K562 (cell line): ENCODE measurements at regions of chr14 and their contacts with region 1.

Region 1: GRCh38 chr14:19878029-19878642 is 3.2 kb downstream of the OR4K2 start:
- DNase-seq: peak; percentile 15 to 43 (median 17)
- ATAC-seq: no peak
- H3K4me3 ChIP-seq: no peak overlapping the region
- H3K27ac ChIP-seq: no peak overlapping the region
- H3K4me1 ChIP-seq: no peaks in the 10 kb centered on the region
- H3K27me3 ChIP-seq: no peaks in the 10 kb centered on the region
- CTCF ChIP-seq: peak in 2 of 3 experiments; percentile 45 to 61; a peak in 3 of 6 replicates
- EP300 ChIP-seq: no peak
- POLR2A ChIP-seq: no peak
- RAD21 ChIP-seq: peak; percentile 30 to 59

Region 2: DNA sequence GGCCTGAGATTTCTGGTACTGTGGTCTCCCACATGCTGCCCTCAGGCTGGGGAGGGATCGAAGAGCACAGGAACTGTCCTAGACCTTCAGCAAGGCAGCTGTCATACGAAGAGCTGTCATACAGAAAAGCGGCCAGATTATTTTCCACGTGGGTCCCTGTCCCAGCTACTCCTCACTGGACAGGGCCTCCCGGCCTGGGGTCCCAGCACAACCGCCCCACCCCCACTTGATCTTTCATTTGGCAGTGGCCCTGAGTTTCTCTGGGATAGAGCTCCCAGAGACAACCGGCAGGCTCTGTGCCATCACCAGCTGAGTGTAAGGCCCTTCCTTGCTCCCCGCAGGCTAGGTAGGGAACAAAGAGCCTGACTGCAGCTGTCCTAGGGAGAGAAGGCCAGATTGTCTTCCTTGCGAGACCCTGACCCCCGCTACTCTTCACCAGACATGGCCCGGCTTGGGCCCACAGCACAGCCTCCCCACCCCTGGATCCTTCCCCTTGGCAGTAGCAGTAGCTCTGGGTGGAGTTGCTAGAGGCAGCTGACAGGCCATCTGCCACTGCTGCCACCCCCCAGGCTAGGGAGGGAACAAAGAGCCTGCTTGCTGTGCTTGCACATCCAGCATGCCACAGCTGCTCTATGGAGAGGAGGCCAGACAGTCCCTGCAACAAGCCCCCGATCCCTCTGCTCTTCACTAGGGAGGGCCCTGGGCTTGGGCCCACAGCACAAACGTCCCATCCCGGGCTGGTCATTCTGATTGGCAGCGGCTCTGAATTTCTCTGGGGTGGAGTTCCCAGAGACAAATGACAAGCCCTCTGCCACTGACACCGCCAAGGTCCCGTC is 77.6 kb before region 1 on chr14:
- CTCF ChIA-PET with region 1: no interaction called
- POLR2A ChIA-PET with region 1: no interaction called
- in situ Hi-C with region 1: no loop called
- intact Hi-C with region 1: loop called (anchors 10 kb)
- DNase-seq: no peak
- ATAC-seq: peak; percentile 42
- H3K4me3 ChIP-seq: no peak overlapping the region
- H3K27ac ChIP-seq: no peak overlapping the region
- H3K4me1 ChIP-seq: no peaks in the 10 kb centered on the region
- H3K27me3 ChIP-seq: no peaks in the 10 kb centered on the region
- CTCF ChIP-seq: no peak
- EP300 ChIP-seq: no peak
- POLR2A ChIP-seq: no peak
- RAD21 ChIP-seq: no peak

Region 3: DNA sequence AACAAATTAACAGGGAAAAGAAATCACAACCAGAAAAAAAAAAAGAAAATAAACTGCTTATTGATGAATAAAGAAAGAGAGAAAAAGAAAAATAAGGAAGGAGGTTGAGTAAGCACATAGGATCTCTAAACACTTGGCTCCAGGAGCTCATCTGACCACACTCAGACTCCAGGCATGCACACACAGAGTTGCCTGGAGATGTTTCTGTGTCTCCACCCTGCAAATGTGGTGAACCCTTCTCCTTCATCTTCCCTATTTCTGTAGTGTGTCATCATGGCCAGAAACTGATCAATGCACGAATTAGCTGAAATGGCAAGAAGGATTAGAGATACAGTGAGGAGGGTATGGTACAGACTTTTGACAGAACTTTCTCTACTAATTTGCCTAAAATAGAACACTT is 54.4 kb before region 1 on chr14:
- CTCF ChIA-PET with region 1: no interaction called
- POLR2A ChIA-PET with region 1: no interaction called
- in situ Hi-C with region 1: no loop called
- intact Hi-C with region 1: no loop called
- DNase-seq: no peak
- ATAC-seq: no peak
- H3K4me3 ChIP-seq: no peak overlapping the region
- H3K27ac ChIP-seq: no peak overlapping the region
- H3K4me1 ChIP-seq: no peaks in the 10 kb centered on the region
- H3K27me3 ChIP-seq: no peaks in the 10 kb centered on the region
- CTCF ChIP-seq: no peak
- EP300 ChIP-seq: no peak
- POLR2A ChIP-seq: no peak
- RAD21 ChIP-seq: no peak